ENCODE measurements at regions of chr10 and their contacts with region 1.

Region 1: GRCh38 chr10:58384999-58385783 is at the start of gene TFAM:
- DNase-seq: peak; percentile 92
- H3K4me3 Mint-ChIP-seq: peak within 1 kb of the TSS; percentile 99
- H3K27ac Mint-ChIP-seq: peak within 1 kb of the TSS; percentile 98
- H3K4me1 Mint-ChIP-seq: peaks cover 51% of the 10 kb centered on the region
- H3K27me3 Mint-ChIP-seq: peaks cover 2% of the 10 kb centered on the region
- total RNA-seq, gene TFAM: 99.9 and 106 TPM in 2 replicates

Region 2: GRCh38 chr10:58268870-58269605 is 116.2 kb before region 1 on chr10 and contains the start of gene CISD1:
- intact Hi-C with region 1: loop called (anchors 1 kb)
- DNase-seq: peak; percentile 95
- H3K4me3 Mint-ChIP-seq: peak within 1 kb of the TSS; percentile 94
- H3K27ac Mint-ChIP-seq: peak within 1 kb of the TSS; percentile 98
- H3K4me1 Mint-ChIP-seq: peaks cover 40% of the 10 kb centered on the region
- H3K27me3 Mint-ChIP-seq: no peaks in the 10 kb centered on the region
- total RNA-seq, gene CISD1: 50.4 and 56.0 TPM in 2 replicates

Region 3: DNA sequence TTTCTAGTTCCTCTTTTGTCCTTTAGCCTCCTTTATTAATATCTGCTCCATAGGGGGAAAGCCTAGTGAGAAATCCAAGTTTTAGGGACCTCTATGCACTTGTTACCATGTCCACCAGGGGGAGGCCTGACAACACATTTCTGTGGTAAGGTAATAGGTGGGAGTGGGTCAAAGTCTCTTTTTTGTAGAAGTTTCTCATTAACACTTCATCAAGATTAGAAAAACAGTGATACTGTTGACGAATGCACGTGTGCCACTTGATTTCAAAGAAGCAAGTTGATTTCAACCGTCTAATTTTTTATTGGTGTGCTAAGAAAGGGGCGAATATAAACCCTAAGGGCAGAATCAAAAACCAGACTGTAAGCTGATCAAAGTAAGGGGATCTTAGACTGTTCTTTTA is 85.6 kb before region 1 on chr10:
- intact Hi-C with region 1: loop called (anchors 1 kb)
- DNase-seq: peak; percentile 25
- H3K4me3 Mint-ChIP-seq: no peak overlapping the region
- H3K27ac Mint-ChIP-seq: no peak overlapping the region
- H3K4me1 Mint-ChIP-seq: peaks cover 4% of the 10 kb centered on the region
- H3K27me3 Mint-ChIP-seq: peaks cover 12% of the 10 kb centered on the region

Region 4: GRCh38 chr10:58372607-58373441 is 12.4 kb before region 1 on chr10:
- intact Hi-C with region 1: loop called (anchors 2 kb)
- DNase-seq: no peak
- H3K4me3 Mint-ChIP-seq: no peak overlapping the region
- H3K27ac Mint-ChIP-seq: no peak overlapping the region
- H3K4me1 Mint-ChIP-seq: no peaks in the 10 kb centered on the region
- H3K27me3 Mint-ChIP-seq: no peaks in the 10 kb centered on the region

Region 5: DNA sequence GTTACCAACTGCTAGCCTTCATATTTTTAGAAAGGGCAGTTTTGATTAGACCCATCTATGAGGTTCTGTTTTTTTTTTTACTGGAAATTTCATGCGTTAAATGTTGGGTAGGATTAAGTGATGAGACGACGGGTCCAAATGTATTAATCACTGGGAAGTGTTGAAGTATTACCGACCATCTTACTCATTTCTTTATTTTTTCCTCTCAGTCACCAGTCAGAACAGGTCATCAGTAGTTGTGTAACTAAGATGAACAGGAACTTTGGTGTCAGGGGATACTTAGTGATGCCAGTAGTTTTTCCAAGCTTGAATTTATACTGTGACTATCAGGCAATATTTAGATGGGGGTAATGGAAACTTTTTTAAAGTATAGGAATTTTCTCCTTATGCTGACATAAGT is 14.2 kb after region 1 on chr10:
- intact Hi-C with region 1: no loop called
- DNase-seq: no peak
- H3K4me3 Mint-ChIP-seq: no peak overlapping the region
- H3K27ac Mint-ChIP-seq: no peak overlapping the region
- H3K4me1 Mint-ChIP-seq: no peaks in the 10 kb centered on the region
- H3K27me3 Mint-ChIP-seq: no peaks in the 10 kb centered on the region

Measured in activated T-helper 1 cell treated with anti-CD3 and anti-CD28 coated beads, Interleukin-12 subunit alpha, Interleukin-12 subunit beta, Interleukin-2, Interleukin-4 antibody, amounts not matched to agents 30 ng/mL and 10 ng/mL and 1 ng/mL, durations not matched to agents 14 hours and 24 hours and 36 hours (primary cell).